ENCODE measurements at regions of chr15 and their contacts with region 1.

Region 1: DNA sequence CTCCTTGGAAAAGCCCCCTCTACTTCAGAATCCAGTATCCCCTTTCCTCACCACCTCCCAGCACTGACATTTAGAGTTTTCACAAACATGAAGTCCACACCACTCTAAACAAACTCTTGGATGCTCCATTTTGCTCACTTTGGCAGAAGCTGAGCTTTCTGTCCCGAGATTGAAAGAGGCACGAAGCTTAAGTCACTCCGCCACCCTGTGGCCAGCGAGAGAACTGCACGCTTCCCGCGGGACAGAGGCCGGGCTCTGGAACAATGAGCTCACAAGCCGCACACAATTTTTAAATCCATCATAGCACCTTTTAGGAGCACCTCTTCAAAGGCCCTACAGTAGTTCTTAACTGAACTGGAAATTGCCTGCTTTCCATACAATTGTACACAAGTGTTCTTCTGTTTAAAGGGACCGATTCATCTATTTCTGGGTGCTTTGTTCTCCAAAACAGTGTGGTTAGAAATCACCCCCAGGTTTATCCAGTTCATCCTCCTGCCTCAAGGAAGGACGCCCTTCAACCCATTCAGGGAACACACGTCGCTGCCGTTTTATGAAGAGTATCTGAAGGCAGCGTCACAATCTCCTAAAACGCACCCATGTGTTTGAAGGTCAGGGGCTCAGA is 226.1 kb downstream of the VPS13C start:
- DNase-seq: peak; percentile 75
- ATAC-seq: peak; percentile 77
- H3K4me3 Mint-ChIP-seq: no peak overlapping the region
- H3K27ac Mint-ChIP-seq: no peak overlapping the region
- H3K4me1 Mint-ChIP-seq: peaks cover 15% of the 10 kb centered on the region
- H3K27me3 Mint-ChIP-seq: peaks cover 13% of the 10 kb centered on the region

Region 2: DNA sequence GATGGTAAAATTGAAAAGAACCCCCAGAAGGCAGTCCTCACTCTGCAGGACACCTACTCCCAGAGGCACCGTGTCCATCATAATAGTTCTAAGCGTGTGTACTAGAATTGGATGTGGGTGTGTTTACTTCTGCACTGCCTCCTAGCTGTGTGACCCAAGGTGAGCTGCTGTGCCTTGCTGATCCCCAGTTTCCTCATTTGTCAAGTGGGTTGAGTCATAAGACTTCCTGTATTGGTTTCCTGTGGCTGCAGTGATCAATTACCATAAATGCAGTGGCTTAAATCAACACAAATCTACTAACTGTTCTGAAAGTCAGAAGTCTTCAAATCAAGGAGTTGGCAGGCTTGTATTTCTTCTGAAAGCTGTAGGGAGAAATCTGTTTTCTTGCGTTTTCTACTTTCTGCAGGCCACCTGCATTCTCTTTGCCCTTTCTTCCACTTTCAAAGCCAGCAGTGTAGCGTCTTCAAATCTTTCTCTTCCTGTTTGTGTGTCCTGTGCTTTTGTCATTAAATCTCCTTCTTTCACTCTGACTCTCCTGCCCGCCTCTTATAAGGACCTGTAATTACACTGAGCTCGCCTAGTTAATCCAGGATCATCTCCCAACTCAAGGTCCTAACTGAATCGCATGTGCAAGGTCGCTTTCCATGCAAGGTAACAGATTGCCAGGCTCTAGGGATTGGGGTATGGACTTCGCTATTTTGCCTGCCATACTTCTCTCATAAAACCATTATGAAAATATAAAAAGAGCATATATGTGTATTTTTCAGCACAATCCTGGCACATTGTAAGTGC is 664.1 kb before region 1 on chr15:
- CTCF ChIA-PET with region 1: interaction called, 36 read pairs
- POLR2A ChIA-PET with region 1: no interaction called
- DNase-seq: peak; percentile 50
- ATAC-seq: peak; percentile 78
- H3K4me3 Mint-ChIP-seq: peak overlapping the region; percentile 40
- H3K27ac Mint-ChIP-seq: peak overlapping the region; percentile 79
- H3K4me1 Mint-ChIP-seq: peaks cover 20% of the 10 kb centered on the region
- H3K27me3 Mint-ChIP-seq: peaks cover 11% of the 10 kb centered on the region

Region 3: DNA sequence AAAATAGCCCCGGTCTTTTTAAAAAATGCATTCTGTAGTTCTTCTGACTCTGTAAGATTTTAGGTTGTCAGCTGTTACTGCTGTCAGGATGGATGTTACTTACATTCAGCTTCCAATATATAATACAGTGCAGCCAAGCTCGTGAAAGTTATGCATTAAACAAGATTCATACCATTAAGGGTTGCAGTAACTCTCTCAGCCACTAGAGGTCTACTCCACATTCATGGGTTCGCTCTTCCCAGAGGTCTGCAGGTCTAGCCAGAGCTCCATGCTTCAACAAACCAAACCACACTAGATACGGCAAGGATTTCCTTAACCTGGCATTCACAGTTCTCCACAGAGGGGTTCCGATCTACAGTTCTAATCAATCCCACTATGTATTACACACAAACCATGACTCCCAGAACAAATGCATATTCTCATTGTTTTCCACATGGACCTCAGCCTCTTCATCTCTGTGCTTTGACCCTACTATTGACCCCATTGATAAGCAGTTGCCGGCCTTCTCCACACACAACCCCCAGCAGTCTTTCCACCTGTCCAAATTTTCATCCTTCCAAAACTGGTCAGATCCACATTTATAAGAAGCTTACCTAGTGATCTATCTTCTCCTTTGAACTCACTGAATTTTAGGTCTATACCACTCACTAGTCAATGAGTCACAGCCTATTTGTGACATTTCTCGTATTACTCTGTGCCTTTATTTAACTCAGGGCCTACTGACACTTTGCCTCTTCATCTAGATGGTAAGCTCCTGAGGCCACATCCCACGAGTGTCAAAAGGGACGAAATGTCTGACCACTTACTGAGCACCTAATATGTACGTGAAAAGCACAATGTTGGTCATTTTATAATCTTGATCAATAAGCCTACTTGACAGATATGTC is 638.8 kb before region 1 on chr15:
- CTCF ChIA-PET with region 1: interaction called, 14 read pairs
- POLR2A ChIA-PET with region 1: no interaction called
- DNase-seq: peak; percentile 26
- ATAC-seq: no peak
- H3K4me3 Mint-ChIP-seq: no peak overlapping the region
- H3K27ac Mint-ChIP-seq: no peak overlapping the region
- H3K4me1 Mint-ChIP-seq: no peaks in the 10 kb centered on the region
- H3K27me3 Mint-ChIP-seq: peaks cover 7% of the 10 kb centered on the region

Region 4: DNA sequence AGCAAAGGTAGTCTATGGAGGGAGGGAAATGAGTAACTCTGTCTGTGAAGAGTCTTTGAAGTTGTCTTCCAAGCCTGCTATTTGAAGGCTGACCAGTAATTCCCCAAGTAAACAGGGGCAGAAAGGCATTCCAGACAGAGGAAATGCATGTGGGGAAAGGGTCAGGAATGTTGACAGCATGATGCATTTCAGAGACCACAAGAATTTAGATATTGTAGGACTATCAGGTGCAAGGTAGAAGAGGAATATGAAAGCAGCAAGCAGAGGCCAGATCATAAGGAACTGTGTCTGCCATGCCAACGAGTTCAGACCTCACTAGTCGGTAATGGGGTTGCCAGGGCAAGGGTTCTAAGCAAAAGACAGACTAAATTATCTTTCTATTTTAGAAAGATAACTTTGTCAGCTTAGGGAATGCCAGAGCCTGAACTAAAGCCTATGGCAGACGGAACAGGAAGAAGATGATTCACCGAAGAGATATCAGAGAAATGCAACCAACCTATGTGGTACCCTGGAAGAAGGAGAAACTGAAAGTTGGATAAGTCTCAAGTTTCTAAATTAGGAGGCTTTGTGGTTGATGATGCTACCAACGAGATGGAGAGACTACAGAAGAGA is 278.0 kb before region 1 on chr15:
- CTCF ChIA-PET with region 1: no interaction called
- POLR2A ChIA-PET with region 1: no interaction called
- DNase-seq: no peak
- ATAC-seq: no peak
- H3K4me3 Mint-ChIP-seq: no peak overlapping the region
- H3K27ac Mint-ChIP-seq: no peak overlapping the region
- H3K4me1 Mint-ChIP-seq: no peaks in the 10 kb centered on the region
- H3K27me3 Mint-ChIP-seq: peaks cover 12% of the 10 kb centered on the region

Region 5: GRCh38 chr15:61752001-61752400 is 82.2 kb before region 1 on chr15:
- CTCF ChIA-PET with region 1: interaction called, 10 read pairs
- POLR2A ChIA-PET with region 1: no interaction called
- DNase-seq: no peak
- ATAC-seq: no peak
- H3K4me3 Mint-ChIP-seq: no peak overlapping the region
- H3K27ac Mint-ChIP-seq: no peak overlapping the region
- H3K4me1 Mint-ChIP-seq: no peaks in the 10 kb centered on the region
- H3K27me3 Mint-ChIP-seq: peaks cover 3% of the 10 kb centered on the region

Region 6: GRCh38 chr15:61892140-61892539 is 58.0 kb after region 1 on chr15:
- CTCF ChIA-PET with region 1: no interaction called
- POLR2A ChIA-PET with region 1: no interaction called
- DNase-seq: no peak
- ATAC-seq: no peak
- H3K4me3 Mint-ChIP-seq: no peak overlapping the region
- H3K27ac Mint-ChIP-seq: no peak overlapping the region
- H3K4me1 Mint-ChIP-seq: peaks cover 15% of the 10 kb centered on the region
- H3K27me3 Mint-ChIP-seq: no peaks in the 10 kb centered on the region

Region 7: DNA sequence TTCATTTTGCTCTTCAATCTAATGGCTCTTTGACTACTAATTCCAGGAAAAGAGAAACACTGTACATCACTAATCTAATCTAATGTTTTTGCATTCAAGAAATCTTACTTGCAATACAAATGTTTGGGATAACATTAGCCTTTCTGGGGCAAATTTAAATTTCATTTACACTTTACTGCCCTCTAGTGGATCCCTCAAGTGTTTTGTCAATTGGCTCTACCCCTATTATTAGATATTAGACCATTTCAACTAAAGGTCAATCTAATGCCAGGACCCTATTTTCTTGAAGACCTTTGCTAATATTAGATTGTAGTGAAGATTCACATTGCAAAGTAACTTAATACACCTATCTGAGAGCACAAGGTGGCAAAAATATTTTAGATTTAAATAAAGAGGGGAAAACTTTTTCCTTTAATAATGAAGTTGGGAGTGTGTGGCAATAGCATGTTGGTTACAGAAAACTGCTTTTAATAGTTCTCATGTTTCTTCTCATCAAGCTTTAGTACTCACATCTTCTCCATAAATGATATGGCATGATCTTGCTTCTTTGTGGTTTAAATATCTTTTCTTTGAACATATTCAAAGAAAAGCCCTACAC is 237.6 kb after region 1 on chr15:
- CTCF ChIA-PET with region 1: interaction called, 20 read pairs
- POLR2A ChIA-PET with region 1: no interaction called
- DNase-seq: no peak
- ATAC-seq: no peak
- H3K4me3 Mint-ChIP-seq: no peak overlapping the region
- H3K27ac Mint-ChIP-seq: no peak overlapping the region
- H3K4me1 Mint-ChIP-seq: peaks cover 12% of the 10 kb centered on the region
- H3K27me3 Mint-ChIP-seq: peaks cover 27% of the 10 kb centered on the region

Measured in activated CD8-positive, alpha-beta T cell treated with anti-CD3 and anti-CD28 coated beads, Interleukin-2, amount 10 ng/mL, durations not matched to agents 7 days and 5 days (primary cell).